ENCODE measurements at regions of chr3 and their contacts with region 1.

Region 1: GRCh38 chr3:181313335-181313734 is 323.8 kb upstream of the DNAJC19 start:
- DNase-seq: no peak
- H3K4me3 ChIP-seq: no peak overlapping the region
- CTCF ChIP-seq: no peak

Region 2: DNA sequence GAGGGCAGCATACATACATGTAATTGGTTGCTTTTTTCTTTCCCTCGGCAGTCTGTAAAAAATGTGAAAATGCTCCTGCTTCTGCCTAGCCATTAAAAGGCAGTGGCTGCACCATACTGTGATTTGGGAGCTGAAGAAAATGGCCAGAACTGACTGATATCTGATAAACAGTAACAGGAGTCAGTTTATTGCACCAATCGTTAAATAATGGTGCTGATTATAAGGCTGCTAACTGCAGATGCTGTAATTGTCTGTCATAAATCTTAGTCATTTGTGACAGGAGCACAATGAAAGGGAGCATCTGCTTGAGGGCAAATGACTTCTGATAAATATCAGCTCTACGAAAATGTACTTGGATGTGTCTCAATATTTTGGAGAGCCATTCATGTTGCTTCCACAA is 60.7 kb before region 1 on chr3:
- in situ Hi-C with region 1: no loop called
- DNase-seq: no peak
- H3K4me3 ChIP-seq: no peak overlapping the region
- CTCF ChIP-seq: no peak

Region 3: GRCh38 chr3:181369637-181370036 is 56.3 kb after region 1 on chr3:
- in situ Hi-C with region 1: loop called (anchors 5 kb)
- DNase-seq: no peak
- H3K4me3 ChIP-seq: no peak overlapping the region
- CTCF ChIP-seq: no peak